GM18951 (cell line): ENCODE measurements at regions of chr7 and their contacts with region 1.

Region 1: DNA sequence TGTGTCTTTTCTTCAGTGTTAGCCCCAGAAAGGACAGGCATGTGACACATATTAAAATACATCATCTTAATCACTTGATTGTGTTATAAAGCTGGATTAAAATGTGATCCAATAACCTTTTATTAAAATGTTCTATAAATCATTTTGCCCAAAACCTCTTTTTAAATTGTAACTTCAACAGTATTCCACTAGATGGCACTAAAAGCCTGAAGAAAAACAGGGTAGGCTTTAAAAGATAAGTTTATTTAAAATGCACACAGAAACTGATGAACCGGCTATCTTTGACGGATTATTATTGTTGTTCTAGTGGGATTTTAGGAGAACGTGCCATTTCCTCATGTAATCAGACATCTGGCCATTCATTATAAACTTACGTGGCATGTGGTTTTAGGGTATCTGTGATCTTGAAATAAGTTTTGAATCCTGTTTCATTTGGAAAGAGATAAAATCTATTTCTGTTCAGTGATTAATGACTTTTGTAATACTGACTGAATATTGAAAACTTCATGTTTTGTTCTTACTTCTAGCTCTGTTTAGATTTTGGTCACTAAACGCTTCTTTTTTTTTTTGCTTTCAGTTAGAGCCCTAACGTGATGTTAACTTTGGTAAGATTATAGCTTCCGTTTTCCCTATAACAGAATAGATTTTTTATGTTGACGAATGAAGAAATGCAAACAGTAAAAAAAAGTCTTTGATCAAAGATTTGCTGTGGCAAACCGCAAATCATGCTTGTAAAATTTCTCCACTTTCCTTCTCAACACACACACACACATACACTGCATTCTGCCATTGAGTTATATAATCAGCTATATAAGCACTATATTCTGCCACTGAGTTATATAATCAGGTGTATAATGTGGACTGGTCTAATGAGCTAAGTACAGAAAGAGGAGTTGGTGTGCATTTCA is 13.6 kb downstream of the VPS50 start:
- POLR2A ChIP-seq: no peak

Region 2: DNA sequence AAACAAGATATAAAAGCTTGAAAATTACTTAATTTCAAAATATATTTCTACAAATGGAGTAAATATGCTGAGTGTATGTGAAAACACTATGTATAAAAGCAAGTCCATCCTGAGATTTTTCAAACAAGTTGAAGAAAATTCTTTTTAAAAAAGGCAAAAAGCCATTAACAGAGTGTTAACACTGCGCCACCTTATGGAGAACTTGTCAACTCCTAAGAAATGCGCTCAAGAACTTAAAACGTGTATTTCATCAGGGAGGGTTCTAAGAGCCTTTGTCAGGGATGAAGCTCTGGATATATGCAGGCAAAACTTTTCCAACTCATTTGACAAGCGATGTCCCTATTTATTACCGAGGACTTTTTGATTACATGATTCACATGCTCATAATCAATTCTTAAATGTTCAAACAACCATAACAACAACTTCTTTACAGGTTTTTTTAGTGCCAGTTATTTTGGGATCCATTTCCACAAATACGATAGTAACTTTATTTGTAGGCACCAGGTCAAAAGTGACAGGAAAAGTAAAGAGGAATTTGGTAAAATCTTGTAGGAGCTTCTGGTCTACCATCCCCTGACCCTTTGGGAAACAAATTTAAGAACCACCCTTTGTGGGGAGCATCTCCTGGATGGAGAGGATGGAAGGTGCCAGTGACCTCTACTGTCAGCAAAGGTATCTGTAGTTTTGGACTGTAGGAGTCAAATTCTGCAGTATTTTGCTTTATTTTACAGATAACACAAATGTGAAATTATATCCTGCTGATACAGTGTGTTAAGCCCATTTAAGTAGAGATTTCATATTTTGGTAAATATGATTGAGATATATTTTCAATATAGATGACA is 305.5 kb after region 1 on chr7:
- in situ Hi-C with region 1: loop called (anchors 10 kb)
- POLR2A ChIP-seq: no peak